ENCODE measurements at regions of chr6 and their contacts with region 1.

Region 1: DNA sequence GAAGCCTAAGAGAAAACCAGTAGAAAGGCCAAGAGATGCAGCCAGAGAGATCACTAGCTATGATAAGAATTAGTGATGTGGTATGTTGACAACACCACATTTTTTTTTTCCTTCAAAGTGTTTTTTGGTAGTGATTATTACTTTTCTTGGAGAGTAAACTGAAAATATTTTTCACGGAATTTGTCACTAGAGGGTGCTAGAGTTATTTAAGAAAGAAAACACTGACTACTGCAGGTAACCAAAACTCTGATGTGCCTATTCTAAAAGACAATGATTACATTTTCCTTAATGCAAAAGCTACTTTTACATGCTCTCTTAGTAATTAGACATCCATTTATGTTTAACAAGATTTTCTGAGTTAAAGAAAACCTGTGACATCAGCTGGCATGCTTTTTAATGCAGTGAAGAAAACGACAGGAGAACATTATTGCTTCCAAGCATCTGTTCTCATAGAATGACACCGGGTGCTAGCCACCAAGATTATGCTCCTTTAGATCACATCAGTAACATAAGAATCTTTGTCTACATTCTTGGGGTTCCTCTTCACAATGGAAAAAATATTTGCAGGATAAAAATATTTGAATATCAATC is 28.8 kb downstream of the RWDD2A start:
- DNase-seq: peak; percentile 82
- H3K4me3 ChIP-seq: no peak overlapping the region
- H3K27ac ChIP-seq: peak overlapping the region; percentile 70
- H3K4me1 ChIP-seq: peaks cover 39% of the 10 kb centered on the region
- H3K27me3 ChIP-seq: no peaks in the 10 kb centered on the region
- CTCF ChIP-seq: peak; percentile 72

Region 2: GRCh38 chr6:83365931-83366330 is 143.9 kb after region 1 on chr6:
- CTCF ChIA-PET with region 1: no interaction called
- POLR2A ChIA-PET with region 1: interaction called, 5 read pairs
- intact Hi-C with region 1: loop called (anchors 2 kb)
- DNase-seq: peak; percentile 78
- H3K4me3 ChIP-seq: no peak overlapping the region
- H3K27ac ChIP-seq: peak overlapping the region; percentile 95
- H3K4me1 ChIP-seq: peaks cover 56% of the 10 kb centered on the region
- H3K27me3 ChIP-seq: no peaks in the 10 kb centered on the region
- CTCF ChIP-seq: no peak

Region 3: GRCh38 chr6:83467620-83468036 is 245.6 kb after region 1 on chr6:
- CTCF ChIA-PET with region 1: no interaction called
- POLR2A ChIA-PET with region 1: no interaction called
- intact Hi-C with region 1: no loop called
- DNase-seq: no peak
- H3K4me3 ChIP-seq: no peak overlapping the region
- H3K27ac ChIP-seq: no peak overlapping the region
- H3K4me1 ChIP-seq: no peaks in the 10 kb centered on the region
- H3K27me3 ChIP-seq: no peaks in the 10 kb centered on the region
- CTCF ChIP-seq: no peak

Region 4: GRCh38 chr6:83592770-83593394 is 370.9 kb after region 1 on chr6:
- CTCF ChIA-PET with region 1: no interaction called
- POLR2A ChIA-PET with region 1: no interaction called
- intact Hi-C with region 1: loop called (anchors 10 kb)
- DNase-seq: peak; percentile 60
- H3K4me3 ChIP-seq: no peak overlapping the region
- H3K27ac ChIP-seq: no peak overlapping the region
- H3K4me1 ChIP-seq: no peaks in the 10 kb centered on the region
- H3K27me3 ChIP-seq: no peaks in the 10 kb centered on the region
- CTCF ChIP-seq: peak; percentile 76

Measured in A673 (cell line).